Posterior cingulate gyrus (tissue), 11 donors: ENCODE measurements at regions of chr4 and their contacts with region 1.

Region 1: DNA sequence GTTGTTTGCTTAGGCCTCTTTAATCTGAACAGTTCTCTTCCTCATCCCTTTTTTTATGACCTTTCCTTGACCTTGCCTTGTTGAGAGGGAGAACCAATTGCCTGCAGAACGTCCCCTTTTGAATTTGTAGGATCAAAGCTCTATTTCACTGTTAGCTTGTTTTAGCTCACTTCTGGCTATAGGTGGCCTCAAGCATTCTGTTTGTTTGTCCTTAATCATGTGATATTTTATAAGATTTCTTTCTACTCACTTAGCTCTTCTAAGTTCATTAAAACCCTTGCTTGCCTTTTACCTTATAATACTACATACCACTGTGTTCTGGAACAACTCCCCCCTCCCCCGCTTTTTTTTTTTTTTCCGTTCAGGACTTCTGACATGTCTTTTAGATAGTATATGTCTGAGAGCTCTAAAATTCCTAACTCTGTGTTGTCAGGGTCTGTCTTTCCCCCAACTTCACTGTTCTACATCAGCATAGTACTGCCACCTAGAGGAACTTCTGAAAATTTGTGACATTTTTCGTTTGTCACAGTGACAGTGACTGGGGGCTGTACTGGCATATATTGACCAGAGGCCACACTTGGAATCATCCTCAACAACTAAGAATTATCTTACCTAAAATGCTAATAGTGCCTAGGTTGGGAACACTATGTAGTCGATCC is 128.5 kb downstream of the LARP7 start:
- DNase-seq: no peak

Region 2: DNA sequence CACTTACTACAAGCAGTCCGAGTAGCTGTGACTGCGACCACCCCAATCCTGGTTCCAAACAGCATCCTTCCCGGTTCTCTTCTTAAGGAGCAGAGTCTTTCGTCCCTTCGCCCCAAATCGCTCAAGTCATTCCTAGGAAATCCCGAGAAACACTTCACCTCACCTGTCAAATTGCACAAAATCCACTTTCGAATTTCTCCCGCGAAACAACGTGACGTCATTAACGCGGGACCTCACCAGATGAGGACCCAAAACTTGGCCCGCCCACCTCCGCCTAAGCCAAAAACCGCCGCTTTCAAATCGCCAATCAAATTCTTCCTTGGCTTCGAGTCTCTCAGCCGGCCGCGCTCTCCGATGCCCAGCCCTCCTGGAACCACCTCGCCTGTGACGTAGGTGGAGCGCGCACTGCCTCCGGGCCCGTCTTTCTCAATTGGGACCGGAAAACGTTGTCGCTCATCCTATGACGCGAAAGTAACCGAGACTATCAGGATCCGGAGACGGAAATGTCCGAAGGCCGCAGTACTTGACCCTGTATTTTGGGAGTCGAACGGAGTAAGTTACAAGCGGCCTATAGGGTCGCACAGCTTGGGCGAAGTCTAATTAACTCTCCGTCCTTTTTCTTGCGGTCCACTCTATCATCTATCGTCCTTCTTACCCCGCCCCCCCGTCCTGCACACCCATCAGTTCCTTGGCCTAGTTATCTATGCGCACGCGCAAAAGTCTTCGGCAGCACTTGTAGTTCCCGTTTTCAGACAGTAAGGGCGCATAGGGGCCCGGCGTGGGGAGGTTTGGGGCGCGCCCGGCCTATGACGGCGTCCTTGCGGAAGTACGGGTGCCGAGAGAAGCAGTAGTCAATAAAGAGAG is 128.5 kb before region 1 on chr4 and contains the starts of genes LARP7 and ZGRF1:
- intact Hi-C with region 1: loop called (anchors 5 kb)
- DNase-seq: peak; percentile 95 to 100 (median 98)

Region 3: DNA sequence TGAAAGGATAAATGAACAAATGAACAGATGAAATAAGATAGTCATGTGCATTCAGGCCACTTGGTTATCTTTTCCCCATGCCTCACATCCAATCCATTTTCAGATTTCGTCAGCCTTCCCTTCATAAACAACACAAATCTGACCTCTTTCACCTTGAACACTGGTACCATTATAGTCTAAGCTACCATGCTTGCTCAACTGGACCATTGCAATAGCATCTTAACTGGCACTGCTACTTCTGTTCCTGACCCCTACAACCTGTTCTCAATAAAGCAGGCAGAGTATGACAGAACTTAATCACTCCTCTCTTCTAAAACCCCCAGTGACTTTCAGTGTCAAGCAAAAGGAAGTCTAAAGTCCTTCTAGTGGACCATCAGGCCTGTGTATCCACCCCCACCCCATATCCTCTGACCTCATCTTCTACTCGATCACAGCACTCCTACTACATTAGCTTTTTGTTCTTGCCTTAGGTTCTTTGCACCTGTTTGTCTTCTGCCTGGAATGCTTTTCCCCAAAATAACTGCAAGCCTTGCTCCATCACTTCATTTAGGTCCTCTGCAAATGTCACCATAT is 87.8 kb before region 1 on chr4:
- intact Hi-C with region 1: no loop called
- DNase-seq: no peak

Region 4: DNA sequence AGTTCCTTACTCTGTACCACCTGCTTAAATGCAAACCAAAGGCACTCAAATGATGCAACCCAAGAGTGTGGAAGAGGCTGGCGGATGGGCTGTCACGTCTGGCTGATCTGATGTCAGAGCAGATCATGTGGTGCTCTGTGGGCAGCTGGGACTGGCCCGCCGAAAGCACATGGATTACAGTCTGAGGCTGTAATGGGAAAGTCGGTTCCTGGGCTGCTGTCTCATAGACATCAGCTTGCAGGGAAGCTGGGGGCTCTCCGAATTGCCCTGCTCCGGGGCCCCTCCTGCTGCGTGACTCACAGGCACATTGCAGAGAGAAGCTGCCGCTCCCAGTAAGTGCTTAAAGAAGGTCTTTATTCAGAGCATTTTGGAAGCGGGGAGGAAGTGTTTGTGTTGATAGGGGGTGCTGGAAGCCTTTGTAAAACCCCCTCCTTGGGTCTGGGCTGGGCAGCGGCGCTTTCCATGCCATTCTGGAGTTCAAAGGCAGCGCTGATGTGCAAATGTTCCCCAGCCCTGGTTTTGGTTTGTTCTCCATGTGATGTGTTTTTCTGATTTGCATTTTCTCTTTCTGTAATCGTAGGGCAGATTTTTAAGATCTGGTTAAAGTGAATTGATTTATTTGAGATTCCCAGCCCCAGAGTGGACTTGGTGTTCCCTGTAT is 52.6 kb after region 1 on chr4:
- intact Hi-C with region 1: loop called (anchors 2 kb)
- DNase-seq: peak; percentile 80 to 98 (median 87)